ENCODE measurements at regions of chr6 and their contacts with region 1.

Region 1: GRCh38 chr6:13914351-13914750 is 10.4 kb upstream of the RNF182 start:
- DNase-seq: no peak
- ATAC-seq: no peak
- H3K4me3 ChIP-seq: no peak overlapping the region
- H3K27ac ChIP-seq: no peak overlapping the region
- H3K4me1 ChIP-seq: peaks cover 0 to 3% (median 0%) of the 10 kb centered on the region in 12 donors
- H3K27me3 ChIP-seq: peaks cover 0 to 22% (median 3%) of the 10 kb centered on the region in 9 donors
- CTCF ChIP-seq: no peak
- POLR2A ChIP-seq: no peak

Region 2: GRCh38 chr6:13711733-13712598 is 202.4 kb before region 1 on chr6 and contains the start of gene RANBP9:
- intact Hi-C with region 1: no loop called
- DNase-seq: peak; percentile 89 to 94 (median 90)
- ATAC-seq: peak; percentile 90 to 95 (median 94)
- H3K4me3 ChIP-seq: peak within 1 kb of the TSS; percentile 66 to 96 (median 86)
- H3K27ac ChIP-seq: peak within 1 kb of the TSS; percentile 83 to 99 (median 95)
- H3K4me1 ChIP-seq: peaks cover 0 to 46% (median 28%) of the 10 kb centered on the region in 12 donors
- H3K27me3 ChIP-seq: no peaks in the 10 kb centered on the region
- CTCF ChIP-seq: no peak
- POLR2A ChIP-seq: peak in 1 of 2 donors; percentile 76
- total RNA-seq, gene RANBP9: 25.8 to 43.7 (median 35.0) TPM

Region 3: GRCh38 chr6:14046476-14047068 is 132.2 kb after region 1 on chr6:
- intact Hi-C with region 1: loop called in 7 of 10 experiments (anchors 5 kb)
- DNase-seq: peak in 1 of 5 donors; percentile 32
- ATAC-seq: peak in 1 of 4 donors; percentile 54
- H3K4me3 ChIP-seq: no peak overlapping the region
- H3K27ac ChIP-seq: no peak overlapping the region
- H3K4me1 ChIP-seq: no peaks in the 10 kb centered on the region
- H3K27me3 ChIP-seq: peaks cover 0 to 29% (median 4%) of the 10 kb centered on the region in 9 donors
- CTCF ChIP-seq: peak; percentile 40 to 68 (median 54)
- POLR2A ChIP-seq: no peak

Region 4: GRCh38 chr6:14066782-14067406 is 152.5 kb after region 1 on chr6:
- intact Hi-C with region 1: loop called (anchors 1 to 5 kb)
- DNase-seq: no peak
- ATAC-seq: peak; percentile 32 to 84 (median 75)
- H3K4me3 ChIP-seq: no peak overlapping the region
- H3K27ac ChIP-seq: no peak overlapping the region
- H3K4me1 ChIP-seq: peaks cover 0 to 7% (median 0%) of the 10 kb centered on the region in 12 donors
- H3K27me3 ChIP-seq: peaks cover 0 to 4% (median 0%) of the 10 kb centered on the region in 9 donors
- CTCF ChIP-seq: peak; percentile 49 to 78 (median 66)
- POLR2A ChIP-seq: no peak

Region 5: GRCh38 chr6:14144678-14145113 is 230.3 kb after region 1 on chr6:
- intact Hi-C with region 1: loop called (anchors 2 to 5 kb)
- DNase-seq: peak; percentile 57 to 78 (median 65)
- ATAC-seq: peak in 3 of 4 donors; percentile 81 to 84 (median 83)
- H3K4me3 ChIP-seq: no peak overlapping the region
- H3K27ac ChIP-seq: no peak overlapping the region
- H3K4me1 ChIP-seq: peaks cover 0 to 9% (median 0%) of the 10 kb centered on the region in 12 donors
- H3K27me3 ChIP-seq: no peaks in the 10 kb centered on the region
- CTCF ChIP-seq: peak; percentile 82 to 98 (median 91)
- POLR2A ChIP-seq: no peak

Measured in heart left ventricle (tissue), 16 donors.